ENCODE measurements at regions of chr19 and their contacts with region 1.

Region 1: DNA sequence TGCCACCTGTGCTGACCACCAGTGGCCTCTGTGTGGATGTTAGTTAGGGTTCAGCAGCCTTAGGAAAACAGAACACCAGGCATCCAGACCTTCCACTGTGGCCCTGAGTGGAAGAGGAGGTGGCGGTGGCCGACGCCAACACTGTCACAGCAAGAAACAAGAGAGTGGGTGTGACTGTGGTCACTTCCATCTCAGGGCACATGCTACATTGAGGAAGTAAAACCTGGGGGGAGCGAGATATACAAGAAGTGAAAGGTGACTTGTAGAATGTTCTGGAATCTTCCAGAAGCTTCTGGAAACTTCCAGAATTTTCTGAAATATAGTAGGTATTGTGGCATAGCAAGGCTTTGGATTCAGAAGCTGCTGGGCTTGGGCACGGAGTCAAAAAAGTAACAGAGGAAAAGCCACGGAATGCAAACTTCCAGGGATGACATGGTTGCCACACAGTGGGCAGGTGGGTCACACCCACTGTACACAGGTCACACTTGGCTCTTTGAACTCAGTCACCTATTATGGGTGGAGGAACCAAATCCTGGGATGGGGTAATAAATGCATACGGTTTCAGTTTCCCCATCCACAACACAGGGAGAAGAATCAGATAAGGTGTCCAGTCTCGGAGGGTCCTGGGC is 24.3 kb downstream of the GNG7 start:
- DNase-seq: peak; percentile 46
- ATAC-seq: peak; percentile 59
- H3K4me3 Mint-ChIP-seq: peak overlapping the region; percentile 62
- H3K27ac Mint-ChIP-seq: peak overlapping the region; percentile 96
- H3K4me1 Mint-ChIP-seq: peaks cover 72% of the 10 kb centered on the region
- H3K27me3 Mint-ChIP-seq: no peaks in the 10 kb centered on the region
- CTCF ChIP-seq: no peak

Region 2: DNA sequence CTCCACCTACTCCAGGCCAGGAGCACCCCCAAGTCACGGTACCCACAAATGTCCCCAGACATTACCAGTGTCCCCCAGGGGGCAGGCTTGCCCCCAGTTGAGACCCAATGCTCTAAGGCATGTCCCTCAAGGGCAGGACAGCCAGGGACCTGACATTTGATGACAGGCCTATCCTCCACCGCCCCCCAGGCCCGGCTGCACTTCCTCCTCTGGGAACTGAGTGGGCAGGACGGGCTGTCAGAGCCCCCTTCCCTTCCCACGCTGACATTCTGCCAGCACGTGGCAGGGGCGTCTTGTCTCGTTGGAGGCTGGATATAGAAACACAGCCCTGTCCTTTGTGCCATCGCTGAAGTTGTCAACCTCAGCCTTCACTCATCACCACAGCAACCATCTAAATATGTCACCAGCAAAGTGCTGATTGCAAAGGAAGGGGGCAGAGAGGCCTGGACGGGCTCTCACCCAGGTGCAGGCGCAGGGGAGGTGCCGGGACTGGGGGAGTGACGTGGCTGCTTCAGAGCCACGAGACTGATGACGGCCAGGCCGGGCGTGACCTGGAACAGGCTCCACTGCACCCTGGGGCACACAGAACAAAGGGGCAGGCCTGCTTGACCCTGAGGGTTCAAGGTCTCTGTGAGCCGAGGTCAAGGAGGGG is 14.1 kb before region 1 on chr19:
- CTCF ChIA-PET with region 1: no interaction called
- POLR2A ChIA-PET with region 1: interaction called, 14 read pairs
- intact Hi-C with region 1: loop called (anchors 1 kb)
- DNase-seq: peak; percentile 74
- ATAC-seq: peak; percentile 89
- H3K4me3 Mint-ChIP-seq: peak overlapping the region; percentile 64
- H3K27ac Mint-ChIP-seq: peak overlapping the region; percentile 94
- H3K4me1 Mint-ChIP-seq: peaks cover 57% of the 10 kb centered on the region
- H3K27me3 Mint-ChIP-seq: no peaks in the 10 kb centered on the region
- CTCF ChIP-seq: no peak

Region 3: GRCh38 chr19:2702162-2703076 is 24.3 kb after region 1 on chr19 and contains the start of gene GNG7:
- CTCF ChIA-PET with region 1: interaction called, 3 read pairs
- POLR2A ChIA-PET with region 1: interaction called, 176 read pairs
- intact Hi-C with region 1: loop called (anchors 1 kb)
- DNase-seq: peak; percentile 99
- ATAC-seq: peak; percentile 99
- H3K4me3 Mint-ChIP-seq: peak within 1 kb of the TSS; percentile 85
- H3K27ac Mint-ChIP-seq: peak within 1 kb of the TSS; percentile 89
- H3K4me1 Mint-ChIP-seq: peaks cover 53% of the 10 kb centered on the region
- H3K27me3 Mint-ChIP-seq: no peaks in the 10 kb centered on the region
- CTCF ChIP-seq: no peak
- total RNA-seq, gene GNG7: 34.8 and 35.4 TPM in 2 replicates

Region 4: GRCh38 chr19:2739602-2740313 is 61.6 kb after region 1 on chr19 and contains the start of gene SLC39A3:
- CTCF ChIA-PET with region 1: no interaction called
- POLR2A ChIA-PET with region 1: interaction called, 6 read pairs
- intact Hi-C with region 1: loop called (anchors 1 kb)
- DNase-seq: peak; percentile 94
- ATAC-seq: peak; percentile 100
- H3K4me3 Mint-ChIP-seq: peak within 1 kb of the TSS; percentile 88
- H3K27ac Mint-ChIP-seq: peak within 1 kb of the TSS; percentile 65
- H3K4me1 Mint-ChIP-seq: peaks cover 28% of the 10 kb centered on the region
- H3K27me3 Mint-ChIP-seq: peaks cover 3% of the 10 kb centered on the region
- CTCF ChIP-seq: no peak
- total RNA-seq, gene SLC39A3: 33.8 and 34.3 TPM in 2 replicates

Region 5: GRCh38 chr19:2950286-2951124 is 272.3 kb after region 1 on chr19:
- CTCF ChIA-PET with region 1: no interaction called
- POLR2A ChIA-PET with region 1: no interaction called
- intact Hi-C with region 1: no loop called
- DNase-seq: peak; percentile 99
- ATAC-seq: peak; percentile 93
- H3K4me3 Mint-ChIP-seq: peak overlapping the region; percentile 98
- H3K27ac Mint-ChIP-seq: peak overlapping the region; percentile 98
- H3K4me1 Mint-ChIP-seq: peaks cover 20% of the 10 kb centered on the region
- H3K27me3 Mint-ChIP-seq: no peaks in the 10 kb centered on the region
- CTCF ChIP-seq: no peak